ENCODE measurements at regions of chr16 and their contacts with region 1.

Region 1: GRCh38 chr16:48156790-48157209 is 1.0 kb upstream of the ABCC12 start:
- DNase-seq: peak; percentile 80
- ATAC-seq: peak; percentile 70
- H3K4me3 ChIP-seq: no peak overlapping the region
- H3K27ac ChIP-seq: peak overlapping the region; percentile 74
- H3K4me1 ChIP-seq: peaks cover 25% of the 10 kb centered on the region
- H3K27me3 ChIP-seq: no peaks in the 10 kb centered on the region
- CTCF ChIP-seq: peak; percentile 80

Region 2: GRCh38 chr16:48064971-48065370 is 91.8 kb before region 1 on chr16:
- CTCF ChIA-PET with region 1: no interaction called
- POLR2A ChIA-PET with region 1: no interaction called
- intact Hi-C with region 1: loop called (anchors 5 kb)
- DNase-seq: peak; percentile 46
- ATAC-seq: no peak
- H3K4me3 ChIP-seq: no peak overlapping the region
- H3K27ac ChIP-seq: no peak overlapping the region
- H3K4me1 ChIP-seq: no peaks in the 10 kb centered on the region; the same call in 1 of the 2 replicates
- H3K27me3 ChIP-seq: no peaks in the 10 kb centered on the region
- CTCF ChIP-seq: no peak